Right ventricle myocardium superior (tissue), 1 donor: ENCODE measurements at regions of chr10 and their contacts with region 1.

Region 1: GRCh38 chr10:109187677-109188076 is 735.6 kb downstream of the XPNPEP1 start:
- DNase-seq: no peak
- ATAC-seq: no peak

Region 2: GRCh38 chr10:109517748-109518147 is 330.1 kb after region 1 on chr10:
- intact Hi-C with region 1: loop called (anchors 5 kb)
- DNase-seq: no peak
- ATAC-seq: no peak